ENCODE measurements at regions of chrX and their contacts with region 1.

Region 1: DNA sequence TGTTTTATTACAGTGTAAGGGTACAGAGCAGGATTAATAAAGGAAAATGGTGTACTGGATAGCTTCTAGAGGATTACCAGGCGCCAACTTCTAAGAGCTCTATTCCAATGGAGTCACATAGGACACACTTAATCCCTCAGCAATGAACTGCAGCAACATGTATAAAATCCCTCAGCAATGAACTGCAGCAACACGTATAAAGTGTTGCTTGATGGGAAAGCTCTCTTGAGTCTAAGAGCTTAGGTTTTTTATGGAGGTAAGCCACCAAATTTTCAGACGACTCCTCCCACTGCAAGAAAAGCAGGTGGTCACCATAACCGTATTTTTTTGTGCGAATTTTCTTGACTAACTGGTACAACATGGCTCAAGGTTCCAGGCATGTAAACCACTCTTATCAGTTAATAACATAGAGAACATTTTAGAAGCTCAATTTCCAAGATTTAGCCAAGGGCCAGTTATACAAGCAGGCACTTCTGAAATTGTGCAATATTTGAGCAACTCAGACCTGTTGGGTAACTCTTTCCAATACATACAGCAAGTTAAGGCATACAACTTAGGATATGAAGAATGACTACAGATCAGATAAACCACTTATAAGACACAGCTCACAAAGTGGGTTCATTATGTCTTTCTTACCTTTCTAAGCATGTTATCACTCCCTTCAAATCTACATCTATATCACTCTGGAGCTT is 44.0 kb downstream of the ZNF280C start:
- DNase-seq: no peak
- ATAC-seq: no peak
- H3K4me3 ChIP-seq: no peak overlapping the region
- H3K27ac ChIP-seq: no peak overlapping the region
- H3K4me1 ChIP-seq: no peaks in the 10 kb centered on the region
- H3K27me3 ChIP-seq: no peaks in the 10 kb centered on the region
- CTCF ChIP-seq: no peak

Region 2: DNA sequence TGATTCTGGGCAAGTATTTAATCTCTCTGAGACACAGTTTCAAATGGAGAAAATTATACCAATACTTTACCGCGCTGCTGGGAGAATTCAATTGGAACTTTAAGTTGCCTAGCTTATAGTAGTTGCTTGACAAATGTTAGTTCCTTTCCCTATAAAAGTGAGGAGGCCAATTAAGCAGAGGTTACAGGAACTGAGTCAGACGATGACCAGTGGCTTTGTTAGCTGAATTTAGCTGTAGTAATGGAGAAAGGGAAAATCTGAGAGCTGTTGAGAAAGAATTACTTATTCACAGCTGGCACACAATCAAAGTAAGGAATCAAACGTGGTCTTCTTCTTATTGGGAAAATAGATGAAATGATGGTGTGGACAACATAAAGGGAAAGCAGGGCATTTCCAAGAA is 731.0 kb before region 1 on chrX:
- intact Hi-C with region 1: loop called in 1 of 2 experiments (anchors 10 kb)
- DNase-seq: no peak
- ATAC-seq: no peak
- H3K4me3 ChIP-seq: no peak overlapping the region
- H3K27ac ChIP-seq: no peak overlapping the region
- H3K4me1 ChIP-seq: no peaks in the 10 kb centered on the region
- H3K27me3 ChIP-seq: no peaks in the 10 kb centered on the region
- CTCF ChIP-seq: no peak

Region 3: GRCh38 chrX:130019312-130019711 is 205.4 kb before region 1 on chrX:
- intact Hi-C with region 1: no loop called
- DNase-seq: no peak
- ATAC-seq: no peak
- H3K4me3 ChIP-seq: no peak overlapping the region
- H3K27ac ChIP-seq: no peak overlapping the region
- H3K4me1 ChIP-seq: no peaks in the 10 kb centered on the region
- H3K27me3 ChIP-seq: no peaks in the 10 kb centered on the region
- CTCF ChIP-seq: no peak